Calu3 (cell line): ENCODE measurements at regions of chr17 and their contacts with region 1.

Region 1: GRCh38 chr17:68777243-68777855 is 176.2 kb upstream of the FAM20A start:
- DNase-seq: peak; percentile 59
- H3K4me3 Mint-ChIP-seq: no peak overlapping the region
- H3K27ac Mint-ChIP-seq: peak overlapping the region; percentile 42
- H3K4me1 Mint-ChIP-seq: peaks cover 23% of the 10 kb centered on the region
- H3K27me3 Mint-ChIP-seq: no peaks in the 10 kb centered on the region
- CTCF ChIP-seq: peak; percentile 56

Region 2: DNA sequence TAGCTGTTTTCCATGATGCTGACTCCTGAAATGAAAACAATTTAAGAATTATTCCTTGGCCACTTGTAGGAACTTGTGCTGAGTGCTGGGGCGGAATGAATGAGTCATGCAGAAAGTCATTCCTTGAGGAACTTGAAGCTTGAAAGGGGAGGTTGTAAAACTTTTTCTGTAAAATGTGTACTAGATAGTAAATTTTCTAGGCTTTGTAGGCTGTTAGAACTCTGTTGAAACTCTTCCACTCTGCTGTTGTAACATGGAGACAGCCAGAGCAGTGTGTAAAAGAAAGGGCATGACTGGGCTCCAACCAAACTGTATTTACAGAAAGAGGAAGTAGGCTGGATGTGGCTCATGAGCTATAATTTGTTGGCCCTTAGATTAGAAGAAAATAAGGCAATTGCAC is 131.7 kb after region 1 on chr17:
- CTCF ChIA-PET with region 1: no interaction called
- intact Hi-C with region 1: loop called (anchors 5 kb)
- DNase-seq: peak; percentile 18
- H3K4me3 Mint-ChIP-seq: no peak overlapping the region
- H3K27ac Mint-ChIP-seq: peak overlapping the region; percentile 86
- H3K4me1 Mint-ChIP-seq: peaks cover 9% of the 10 kb centered on the region
- H3K27me3 Mint-ChIP-seq: no peaks in the 10 kb centered on the region
- CTCF ChIP-seq: no peak

Region 3: GRCh38 chr17:68972119-68972704 is 194.9 kb after region 1 on chr17:
- CTCF ChIA-PET with region 1: interaction called, 3 read pairs
- intact Hi-C with region 1: loop called (anchors 1 kb)
- DNase-seq: peak; percentile 5
- H3K4me3 Mint-ChIP-seq: no peak overlapping the region
- H3K27ac Mint-ChIP-seq: no peak overlapping the region
- H3K4me1 Mint-ChIP-seq: no peaks in the 10 kb centered on the region
- H3K27me3 Mint-ChIP-seq: no peaks in the 10 kb centered on the region
- CTCF ChIP-seq: peak; percentile 41

Region 4: GRCh38 chr17:69058165-69058564 is 280.8 kb after region 1 on chr17:
- CTCF ChIA-PET with region 1: interaction called, 9 read pairs
- intact Hi-C with region 1: loop called (anchors 2 kb)
- DNase-seq: no peak
- H3K4me3 Mint-ChIP-seq: no peak overlapping the region
- H3K27ac Mint-ChIP-seq: no peak overlapping the region
- H3K4me1 Mint-ChIP-seq: no peaks in the 10 kb centered on the region
- H3K27me3 Mint-ChIP-seq: no peaks in the 10 kb centered on the region
- CTCF ChIP-seq: no peak